Activated CD4-positive, alpha-beta T cell treated with anti-CD3 and anti-CD28 coated beads for 36 hours (primary cell): ENCODE measurements at regions of chr17 and their contacts with region 1.

Region 1: DNA sequence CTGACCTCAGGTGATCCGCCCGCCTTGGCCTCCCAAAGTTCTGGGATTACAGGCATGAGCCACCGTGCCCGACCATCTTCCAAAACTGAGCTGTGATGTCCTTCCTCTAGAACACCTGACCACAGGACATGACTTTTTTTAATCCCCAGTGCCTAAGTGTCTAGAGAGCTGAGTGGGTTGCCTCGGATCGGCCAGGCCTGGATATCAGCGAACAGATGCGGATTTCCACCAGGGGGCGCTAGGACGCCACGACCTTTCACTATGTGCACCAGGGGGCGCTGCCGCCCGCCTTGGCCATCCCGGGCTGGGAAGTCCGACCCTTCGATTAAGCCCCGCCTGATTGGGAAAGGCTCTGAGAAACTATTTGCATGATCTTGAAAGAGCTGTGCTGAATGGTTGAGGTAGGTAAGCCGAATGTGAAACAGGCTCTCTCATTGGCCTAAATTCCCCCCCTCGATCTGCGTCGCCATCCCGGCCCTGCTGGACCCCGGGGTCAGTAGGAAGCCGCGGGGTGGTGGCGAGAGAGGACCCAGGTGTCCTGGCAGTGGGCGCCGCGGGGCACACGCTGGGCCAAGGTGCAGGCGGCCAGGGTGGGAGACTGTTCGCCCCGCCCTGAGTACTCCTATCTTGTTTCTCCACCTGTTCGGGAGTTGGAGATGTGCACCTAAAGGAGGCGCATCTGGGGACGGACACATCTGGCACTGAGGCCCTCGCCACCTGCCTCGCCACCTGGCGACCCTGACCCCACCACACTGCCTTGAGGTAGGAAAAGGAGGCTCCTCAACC is at the start of gene ACBD4:
- DNase-seq: peak; percentile 98
- ATAC-seq: peak; percentile 91
- H3K4me3 Mint-ChIP-seq: peak within 1 kb of the TSS; percentile 82
- H3K27ac Mint-ChIP-seq: peak within 1 kb of the TSS; percentile 87
- H3K4me1 Mint-ChIP-seq: peaks cover 9% of the 10 kb centered on the region
- H3K27me3 Mint-ChIP-seq: peaks cover 3% of the 10 kb centered on the region
- total RNA-seq, gene ACBD4: 12.7 to 13.4 TPM

Region 2: DNA sequence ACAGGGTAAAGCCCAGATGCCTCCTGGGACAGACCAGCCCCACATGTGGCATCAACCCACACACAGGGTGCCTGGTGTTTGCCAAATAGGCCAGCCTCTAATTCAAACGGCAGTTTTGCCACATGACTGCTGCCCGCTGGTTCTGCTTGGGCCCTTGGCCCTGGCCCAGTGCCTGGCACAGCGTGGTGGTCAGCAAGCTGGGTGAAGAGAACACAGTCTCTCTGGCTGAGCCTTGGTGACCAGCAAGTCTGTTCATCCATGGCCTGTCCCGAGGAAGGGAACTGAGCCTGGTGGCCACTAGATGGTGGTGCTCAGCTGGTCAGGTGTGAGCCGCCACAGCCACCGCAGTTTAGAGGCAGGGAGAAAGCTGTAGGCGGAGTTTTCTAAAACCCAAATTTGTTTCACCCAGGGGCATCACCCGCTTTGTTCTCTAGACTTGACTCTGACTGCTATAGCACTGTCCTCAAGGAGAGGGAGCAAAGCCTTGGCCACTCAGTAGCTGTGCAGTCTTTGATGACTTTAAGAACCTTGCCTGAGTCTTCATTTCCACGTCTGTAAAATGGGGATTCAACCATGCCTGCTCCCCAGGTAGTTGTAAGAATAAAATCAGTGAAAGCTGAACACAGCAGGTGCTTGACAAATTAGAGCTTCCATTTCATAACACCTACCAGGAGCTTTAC is 215.4 kb before region 1 on chr17:
- CTCF ChIA-PET with region 1: interaction called, 5 read pairs
- POLR2A ChIA-PET with region 1: no interaction called
- intact Hi-C with region 1: loop called (anchors 2 to 5 kb)
- DNase-seq: peak; percentile 85
- ATAC-seq: peak; percentile 93
- H3K4me3 Mint-ChIP-seq: no peak overlapping the region
- H3K27ac Mint-ChIP-seq: no peak overlapping the region
- H3K4me1 Mint-ChIP-seq: no peaks in the 10 kb centered on the region
- H3K27me3 Mint-ChIP-seq: peaks cover 9% of the 10 kb centered on the region

Region 3: GRCh38 chr17:45051060-45051719 is 84.2 kb before region 1 on chr17 and contains the start of gene DCAKD:
- CTCF ChIA-PET with region 1: interaction called, 7 read pairs
- POLR2A ChIA-PET with region 1: no interaction called
- intact Hi-C with region 1: loop called in 1 of 2 experiments (anchors 1 kb)
- DNase-seq: peak; percentile 96
- ATAC-seq: peak; percentile 97
- H3K4me3 Mint-ChIP-seq: peak within 1 kb of the TSS; percentile 87
- H3K27ac Mint-ChIP-seq: peak within 1 kb of the TSS; percentile 95
- H3K4me1 Mint-ChIP-seq: peaks cover 50% of the 10 kb centered on the region
- H3K27me3 Mint-ChIP-seq: no peaks in the 10 kb centered on the region
- total RNA-seq, gene DCAKD: 34.8 to 36.2 TPM

Region 4: DNA sequence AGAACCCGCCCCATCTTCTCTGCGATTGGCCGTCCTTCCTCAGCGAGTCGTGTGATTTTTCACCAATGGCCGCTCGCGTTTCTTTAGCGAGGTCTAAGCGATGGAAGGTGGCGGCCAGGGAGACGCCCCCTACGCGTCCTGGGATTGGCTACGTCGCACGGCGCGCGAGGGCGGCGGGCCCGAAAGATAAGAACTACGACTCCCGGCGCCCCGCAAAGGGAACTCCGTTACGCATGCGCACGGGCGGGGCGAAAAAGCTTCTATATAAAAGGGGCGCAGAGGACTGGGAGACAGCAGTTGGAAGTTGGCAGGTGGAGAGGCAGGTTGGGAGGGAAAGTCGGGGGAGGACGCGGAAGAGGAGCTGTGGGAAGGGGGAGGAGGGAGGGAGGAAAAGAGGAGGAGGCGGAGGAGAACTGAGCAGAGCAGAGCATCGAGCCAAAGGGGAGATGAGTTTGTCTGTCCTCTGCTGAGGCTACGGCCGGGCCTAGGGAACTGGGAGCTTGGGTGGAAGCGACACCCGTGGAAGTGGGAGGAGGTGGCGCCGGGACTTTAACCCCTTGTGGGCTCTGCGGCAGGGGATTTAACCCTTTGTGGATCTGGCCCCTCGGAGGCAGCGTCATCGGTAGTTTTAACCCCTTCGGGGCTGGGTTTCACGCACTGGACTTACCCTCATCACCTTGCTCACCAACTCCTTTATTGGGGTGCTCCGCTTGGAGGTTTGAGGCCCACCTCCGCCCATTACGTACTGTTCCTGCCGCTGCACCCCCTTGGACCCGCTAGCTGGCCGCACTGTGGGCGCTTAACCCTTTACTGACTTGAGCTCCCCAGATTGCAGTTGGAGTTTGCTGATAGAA is 13.0 kb after region 1 on chr17 and contains the start of gene HEXIM1:
- CTCF ChIA-PET with region 1: interaction called, 222 read pairs
- POLR2A ChIA-PET with region 1: interaction called, 65 read pairs
- intact Hi-C with region 1: loop called (anchors 1 kb)
- DNase-seq: peak; percentile 99
- ATAC-seq: peak; percentile 78
- H3K4me3 Mint-ChIP-seq: peak within 1 kb of the TSS; percentile 99
- H3K27ac Mint-ChIP-seq: peak within 1 kb of the TSS; percentile 100
- H3K4me1 Mint-ChIP-seq: peaks cover 37% of the 10 kb centered on the region
- H3K27me3 Mint-ChIP-seq: no peaks in the 10 kb centered on the region
- total RNA-seq, gene HEXIM1: 27.1 to 27.3 TPM

Region 5: GRCh38 chr17:45189009-45189408 is 53.6 kb after region 1 on chr17:
- CTCF ChIA-PET with region 1: interaction called, 201 read pairs
- POLR2A ChIA-PET with region 1: no interaction called
- intact Hi-C with region 1: no loop called
- DNase-seq: no peak
- ATAC-seq: no peak
- H3K4me3 Mint-ChIP-seq: no peak overlapping the region
- H3K27ac Mint-ChIP-seq: no peak overlapping the region
- H3K4me1 Mint-ChIP-seq: no peaks in the 10 kb centered on the region
- H3K27me3 Mint-ChIP-seq: no peaks in the 10 kb centered on the region

Region 6: DNA sequence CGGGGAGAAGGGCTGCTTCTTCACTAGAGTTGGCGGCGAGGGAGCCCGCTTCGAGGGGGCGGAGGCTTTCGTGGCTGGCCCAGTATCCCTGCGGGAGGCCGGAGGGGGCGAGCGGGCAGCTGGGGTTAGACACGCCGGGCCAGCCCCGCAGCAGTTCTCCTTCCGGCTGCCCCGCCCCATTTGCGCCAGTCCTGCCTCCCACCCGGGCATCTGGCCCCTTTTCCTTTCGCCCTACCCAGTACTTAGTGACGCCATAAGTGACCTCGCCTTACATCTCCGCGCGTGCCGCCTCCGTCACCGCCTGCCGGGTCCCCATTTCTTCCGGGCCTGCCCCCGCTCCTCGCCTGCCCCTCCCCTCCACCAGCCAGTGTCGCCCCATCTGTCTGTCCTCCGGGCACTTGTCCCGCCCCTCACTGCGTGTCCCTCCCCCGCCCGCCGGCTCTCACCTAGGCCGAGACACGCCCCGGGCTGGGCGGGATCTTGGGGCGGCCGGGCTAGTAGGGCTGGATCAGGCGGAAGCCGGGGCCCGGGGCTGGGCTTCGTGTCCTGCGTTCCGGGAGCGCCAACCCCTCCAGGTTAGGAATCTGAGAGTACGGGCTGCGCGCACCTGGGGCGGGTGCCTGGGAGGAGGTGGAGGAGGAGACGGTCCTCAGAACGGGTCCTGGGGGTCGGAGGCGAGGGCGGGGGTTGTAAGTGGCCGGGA is 112.2 kb after region 1 on chr17:
- CTCF ChIA-PET with region 1: interaction called, 4 read pairs
- POLR2A ChIA-PET with region 1: no interaction called
- intact Hi-C with region 1: loop called in 1 of 2 experiments (anchors 1 kb)
- DNase-seq: peak; percentile 99
- ATAC-seq: peak; percentile 89
- H3K4me3 Mint-ChIP-seq: peak overlapping the region; percentile 83
- H3K27ac Mint-ChIP-seq: peak overlapping the region; percentile 92
- H3K4me1 Mint-ChIP-seq: peaks cover 57% of the 10 kb centered on the region
- H3K27me3 Mint-ChIP-seq: no peaks in the 10 kb centered on the region